HEK293 (cell line): ENCODE measurements at regions of chr21 and their contacts with region 1.

Region 1: GRCh38 chr21:33360881-33361602 is 36.3 kb downstream of the IFNAR1 start:
- H3K4me3 ChIP-seq: no peak overlapping the region; the same call in 1 of the 2 replicates
- H3K27ac ChIP-seq: no peak overlapping the region
- H3K4me1 ChIP-seq: no peaks in the 10 kb centered on the region
- CTCF ChIP-seq: peak; percentile 86

Region 2: DNA sequence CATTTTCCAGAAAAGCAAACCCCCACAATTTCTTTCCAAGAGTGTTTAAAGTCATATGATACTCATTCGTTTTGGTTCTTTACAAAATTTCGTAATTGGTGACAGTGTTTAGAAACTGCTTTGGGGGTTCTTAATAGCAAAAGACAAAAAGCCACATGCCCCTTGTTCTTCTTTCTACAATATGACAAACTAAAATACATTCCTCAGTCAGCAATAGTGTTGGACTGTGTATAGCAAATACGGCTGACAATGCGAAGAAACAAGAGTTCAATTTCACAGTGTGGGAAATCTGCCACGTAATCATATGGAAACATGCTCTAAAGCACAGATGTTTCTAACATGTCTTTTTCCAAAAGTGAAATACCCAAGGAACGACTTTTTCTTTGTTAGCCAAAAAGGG is 43.9 kb before region 1 on chr21:
- CTCF ChIA-PET with region 1: interaction called, 13 read pairs
- POLR2A ChIA-PET with region 1: no interaction called
- H3K4me3 ChIP-seq: no peak overlapping the region
- H3K27ac ChIP-seq: no peak overlapping the region
- H3K4me1 ChIP-seq: no peaks in the 10 kb centered on the region
- CTCF ChIP-seq: no peak

Region 3: GRCh38 chr21:33324291-33325221 is 36.5 kb before region 1 on chr21 and contains the start of gene IFNAR1:
- CTCF ChIA-PET with region 1: interaction called, 16 read pairs
- POLR2A ChIA-PET with region 1: interaction called, 14 read pairs
- H3K4me3 ChIP-seq: peak within 1 kb of the TSS; percentile 88
- H3K27ac ChIP-seq: peak within 1 kb of the TSS; percentile 85
- H3K4me1 ChIP-seq: no peaks in the 10 kb centered on the region
- CTCF ChIP-seq: peak; percentile 71

Region 4: DNA sequence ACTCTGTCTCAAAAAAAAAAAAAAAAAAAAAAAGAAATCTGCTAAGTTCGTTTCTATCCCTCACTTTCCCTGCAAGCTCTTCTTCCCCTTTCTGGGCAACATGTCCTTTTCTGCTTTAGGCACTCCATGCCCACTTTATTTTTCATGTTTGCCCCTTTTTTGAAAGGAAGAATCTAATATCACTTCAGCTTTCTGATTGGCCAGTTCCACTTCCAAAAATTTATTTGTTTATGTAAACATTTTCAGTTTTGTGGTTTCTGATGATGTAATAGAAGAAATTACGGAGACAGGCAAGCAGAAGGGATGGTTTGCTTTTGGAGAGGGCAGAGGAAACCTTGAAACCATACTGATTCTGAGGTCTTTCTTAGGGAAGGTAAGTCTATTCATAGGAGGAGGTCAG is 21.1 kb before region 1 on chr21:
- CTCF ChIA-PET with region 1: interaction called, 107 read pairs
- POLR2A ChIA-PET with region 1: interaction called, 3 read pairs
- H3K4me3 ChIP-seq: no peak overlapping the region
- H3K27ac ChIP-seq: no peak overlapping the region
- H3K4me1 ChIP-seq: 0 out of 2 replicates have a peak, but pooled peaks cover 2% of the 10 kb centered on the region
- CTCF ChIP-seq: no peak

Region 5: DNA sequence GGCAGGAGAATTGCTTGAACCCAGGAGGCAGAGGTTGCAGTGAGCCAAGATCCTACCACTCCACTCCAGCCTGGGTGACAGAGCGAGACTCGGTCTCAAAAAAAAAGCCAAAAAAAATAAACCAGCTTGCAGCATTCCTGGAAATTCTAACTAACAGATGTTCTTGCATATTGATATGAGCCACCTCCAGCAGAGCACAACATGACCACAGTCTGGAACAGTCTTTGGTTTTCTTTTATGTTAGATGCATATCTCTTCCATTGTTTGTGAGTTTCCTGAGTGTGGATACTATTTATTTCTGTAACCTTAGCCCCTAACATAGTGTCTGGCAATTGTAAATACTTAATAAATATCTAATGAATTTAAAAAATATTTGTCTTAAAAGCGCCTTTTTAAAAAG is 12.3 kb before region 1 on chr21:
- CTCF ChIA-PET with region 1: interaction called, 107 read pairs
- POLR2A ChIA-PET with region 1: no interaction called
- H3K4me3 ChIP-seq: no peak overlapping the region
- H3K27ac ChIP-seq: no peak overlapping the region
- H3K4me1 ChIP-seq: no peaks in the 10 kb centered on the region
- CTCF ChIP-seq: no peak

Region 6: DNA sequence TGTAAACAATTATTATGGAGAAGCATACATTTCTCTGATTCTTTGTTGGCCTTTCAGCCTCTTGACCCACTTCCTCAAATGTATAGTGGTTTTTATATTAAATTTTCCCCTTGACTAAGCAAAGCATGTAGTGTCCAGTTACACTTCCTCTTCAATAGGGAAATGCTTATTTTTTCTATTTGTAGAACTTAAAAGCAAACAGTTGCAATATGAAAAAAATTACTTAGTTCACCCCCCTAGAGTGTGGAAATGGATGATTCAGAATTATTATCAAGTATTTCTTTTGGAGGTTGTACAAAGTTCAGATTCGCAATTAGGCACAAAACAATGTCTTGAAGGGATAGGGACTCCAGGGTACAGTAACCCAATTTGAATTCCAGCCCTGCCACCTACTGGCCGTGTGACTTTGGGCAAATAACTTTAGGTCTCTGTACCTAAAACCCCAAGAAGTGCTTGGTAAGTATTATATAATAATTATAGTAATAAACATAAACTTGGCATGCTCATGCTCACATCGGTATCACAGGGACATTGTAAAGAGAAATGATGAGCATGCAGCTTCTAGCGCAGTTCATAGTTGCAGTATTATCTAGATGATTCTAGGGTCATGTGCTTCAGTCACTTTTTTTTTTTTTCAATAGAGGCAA is 13.5 kb after region 1 on chr21:
- CTCF ChIA-PET with region 1: interaction called, 38 read pairs
- POLR2A ChIA-PET with region 1: no interaction called
- H3K4me3 ChIP-seq: no peak overlapping the region
- H3K27ac ChIP-seq: no peak overlapping the region
- H3K4me1 ChIP-seq: peaks cover 3% of the 10 kb centered on the region; the same call in 1 of the 2 replicates
- CTCF ChIP-seq: peak; percentile 39; the same call in 1 of the 2 replicates

Region 7: DNA sequence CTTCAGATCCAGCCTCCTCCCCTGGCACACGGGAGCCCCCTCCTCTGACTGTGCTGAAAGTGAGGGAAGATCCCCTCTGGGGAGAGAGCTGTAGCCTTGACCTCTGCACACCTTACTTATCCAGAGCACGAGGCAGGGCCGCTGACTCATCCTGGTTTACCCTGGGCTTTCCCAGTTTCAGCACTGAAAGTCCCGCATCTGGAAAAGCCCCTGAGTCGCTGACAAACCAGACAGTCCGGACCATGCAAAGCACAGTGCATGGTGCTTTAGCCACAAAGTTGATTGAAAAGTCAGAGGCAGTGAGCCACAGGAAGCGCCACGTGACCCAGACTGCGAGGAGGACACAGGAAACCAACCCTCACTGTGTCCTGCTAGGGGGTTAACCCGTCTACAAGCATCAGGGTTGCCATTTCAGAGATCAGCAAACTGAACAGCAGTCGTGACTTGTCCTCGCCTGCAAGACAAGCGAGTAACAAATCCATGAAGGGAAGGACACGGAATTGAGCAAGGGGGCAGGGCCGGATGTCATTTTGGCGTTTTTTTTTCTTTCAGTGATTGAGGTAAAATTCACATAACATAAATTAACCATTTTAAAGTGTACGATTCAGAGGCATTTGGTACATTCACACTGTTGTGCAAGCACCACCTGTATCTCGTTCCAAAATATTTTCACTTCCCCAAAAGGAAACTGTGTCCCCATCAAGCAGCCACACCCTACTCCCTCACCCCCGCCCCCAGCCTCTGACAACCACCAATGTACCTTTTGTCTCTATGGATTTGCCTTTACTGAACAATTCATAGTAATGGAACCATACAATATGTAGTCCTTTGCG is 22.2 kb after region 1 on chr21:
- CTCF ChIA-PET with region 1: interaction called, 14 read pairs
- POLR2A ChIA-PET with region 1: no interaction called
- H3K4me3 ChIP-seq: no peak overlapping the region
- H3K27ac ChIP-seq: peak overlapping the region; percentile 29; the same call in 1 of the 2 replicates
- H3K4me1 ChIP-seq: peaks cover 9% of the 10 kb centered on the region
- CTCF ChIP-seq: no peak

Region 8: GRCh38 chr21:33619726-33620125 is 258.7 kb after region 1 on chr21:
- CTCF ChIA-PET with region 1: no interaction called
- POLR2A ChIA-PET with region 1: no interaction called
- H3K4me3 ChIP-seq: no peak overlapping the region
- H3K27ac ChIP-seq: no peak overlapping the region
- H3K4me1 ChIP-seq: no peaks in the 10 kb centered on the region
- CTCF ChIP-seq: no peak